ENCODE measurements at regions of chr2 and their contacts with region 1.

Region 1: GRCh38 chr2:146741260-146741659 is 1103.6 kb upstream of the ACVR2A start:
- DNase-seq: no peak
- ATAC-seq: no peak
- H3K4me3 ChIP-seq: no peak overlapping the region
- H3K27ac ChIP-seq: no peak overlapping the region
- H3K4me1 ChIP-seq: no peaks in the 10 kb centered on the region
- H3K27me3 ChIP-seq: no peaks in the 10 kb centered on the region; a peak in 1 of 4 replicates
- CTCF ChIP-seq: no peak
- EP300 ChIP-seq: no peak
- POLR2A ChIP-seq: no peak
- RAD21 ChIP-seq: no peak

Region 2: GRCh38 chr2:146587291-146587713 is 154.0 kb before region 1 on chr2:
- CTCF ChIA-PET with region 1: no interaction called
- POLR2A ChIA-PET with region 1: no interaction called
- RAD21 ChIA-PET with region 1: no interaction called
- SMC1A ChIA-PET with region 1: no interaction called
- in situ Hi-C with region 1: no loop called
- intact Hi-C with region 1: no loop called
- DNase-seq: no peak
- ATAC-seq: no peak
- H3K4me3 ChIP-seq: no peak overlapping the region
- H3K27ac ChIP-seq: no peak overlapping the region
- H3K4me1 ChIP-seq: no peaks in the 10 kb centered on the region
- H3K27me3 ChIP-seq: no peaks in the 10 kb centered on the region
- CTCF ChIP-seq: no peak
- EP300 ChIP-seq: no peak
- POLR2A ChIP-seq: no peak
- RAD21 ChIP-seq: no peak

Region 3: GRCh38 chr2:147904044-147904443 is 1162.8 kb after region 1 on chr2:
- CTCF ChIA-PET with region 1: no interaction called
- POLR2A ChIA-PET with region 1: no interaction called
- RAD21 ChIA-PET with region 1: no interaction called
- SMC1A ChIA-PET with region 1: no interaction called
- in situ Hi-C with region 1: no loop called
- intact Hi-C with region 1: loop called (anchors 5 kb)
- DNase-seq: no peak
- ATAC-seq: no peak
- H3K4me3 ChIP-seq: no peak overlapping the region
- H3K27ac ChIP-seq: no peak overlapping the region
- H3K4me1 ChIP-seq: no peaks in the 10 kb centered on the region
- H3K27me3 ChIP-seq: no peaks in the 10 kb centered on the region
- CTCF ChIP-seq: no peak
- EP300 ChIP-seq: no peak
- POLR2A ChIP-seq: no peak
- RAD21 ChIP-seq: no peak

Measured in GM12878 (cell line).